Activated CD4-positive, alpha-beta T cell treated with anti-CD3 and anti-CD28 coated beads for 36 hours (primary cell): ENCODE measurements at regions of chr18 and their contacts with region 1.

Region 1: DNA sequence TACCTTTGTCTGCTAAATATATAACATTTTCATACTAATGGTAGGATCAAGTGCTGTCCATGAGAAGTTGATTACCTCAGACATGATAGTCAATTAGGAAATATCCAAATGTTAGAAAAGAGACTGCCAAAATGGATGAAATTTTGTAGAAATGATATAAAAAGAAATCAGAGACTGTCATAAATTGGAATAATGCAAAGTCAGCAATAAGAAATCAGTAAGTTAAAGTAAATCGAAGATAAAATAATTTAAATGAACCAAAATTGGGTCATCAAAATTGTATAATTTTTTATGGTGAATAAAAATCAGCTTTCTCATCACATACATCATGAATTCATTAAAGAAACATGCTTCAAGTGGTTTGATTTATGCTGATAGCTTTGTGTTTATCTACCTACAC is 165.3 kb upstream of the CDH2 start:
- DNase-seq: no peak
- ATAC-seq: no peak
- H3K4me3 Mint-ChIP-seq: no peak overlapping the region
- H3K27ac Mint-ChIP-seq: no peak overlapping the region
- H3K4me1 Mint-ChIP-seq: no peaks in the 10 kb centered on the region
- H3K27me3 Mint-ChIP-seq: no peaks in the 10 kb centered on the region

Region 2: DNA sequence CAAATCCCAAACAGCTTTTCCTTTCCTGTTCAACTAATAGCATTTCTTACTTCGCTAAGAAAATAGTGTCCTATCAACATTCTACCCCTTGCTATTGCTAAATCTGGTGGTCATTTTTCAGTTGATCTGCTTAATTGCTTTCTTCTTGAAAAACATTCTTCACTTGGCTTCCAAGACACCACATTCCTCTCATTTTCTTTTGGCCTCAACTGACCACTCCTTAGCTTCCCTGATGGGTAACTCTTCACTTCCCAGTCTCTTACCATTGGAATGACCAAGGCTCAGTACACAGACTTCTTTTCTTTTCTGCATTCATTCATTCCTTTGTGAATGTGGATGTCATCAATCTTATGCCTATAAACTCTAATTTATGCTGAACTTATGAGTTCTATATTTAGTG is 65.5 kb after region 1 on chr18:
- CTCF ChIA-PET with region 1: no interaction called
- POLR2A ChIA-PET with region 1: no interaction called
- intact Hi-C with region 1: loop called in 1 of 2 experiments (anchors 10 kb)
- DNase-seq: no peak
- ATAC-seq: no peak
- H3K4me3 Mint-ChIP-seq: no peak overlapping the region
- H3K27ac Mint-ChIP-seq: no peak overlapping the region
- H3K4me1 Mint-ChIP-seq: no peaks in the 10 kb centered on the region
- H3K27me3 Mint-ChIP-seq: no peaks in the 10 kb centered on the region

Region 3: GRCh38 chr18:28485918-28486317 is 143.7 kb after region 1 on chr18:
- CTCF ChIA-PET with region 1: no interaction called
- POLR2A ChIA-PET with region 1: no interaction called
- intact Hi-C with region 1: loop called in 1 of 2 experiments (anchors 10 kb)
- DNase-seq: no peak
- ATAC-seq: no peak
- H3K4me3 Mint-ChIP-seq: no peak overlapping the region
- H3K27ac Mint-ChIP-seq: no peak overlapping the region
- H3K4me1 Mint-ChIP-seq: no peaks in the 10 kb centered on the region
- H3K27me3 Mint-ChIP-seq: no peaks in the 10 kb centered on the region